Colonic mucosa (tissue), 4 donors: ENCODE measurements at regions of chr21 and their contacts with region 1.

Region 1: DNA sequence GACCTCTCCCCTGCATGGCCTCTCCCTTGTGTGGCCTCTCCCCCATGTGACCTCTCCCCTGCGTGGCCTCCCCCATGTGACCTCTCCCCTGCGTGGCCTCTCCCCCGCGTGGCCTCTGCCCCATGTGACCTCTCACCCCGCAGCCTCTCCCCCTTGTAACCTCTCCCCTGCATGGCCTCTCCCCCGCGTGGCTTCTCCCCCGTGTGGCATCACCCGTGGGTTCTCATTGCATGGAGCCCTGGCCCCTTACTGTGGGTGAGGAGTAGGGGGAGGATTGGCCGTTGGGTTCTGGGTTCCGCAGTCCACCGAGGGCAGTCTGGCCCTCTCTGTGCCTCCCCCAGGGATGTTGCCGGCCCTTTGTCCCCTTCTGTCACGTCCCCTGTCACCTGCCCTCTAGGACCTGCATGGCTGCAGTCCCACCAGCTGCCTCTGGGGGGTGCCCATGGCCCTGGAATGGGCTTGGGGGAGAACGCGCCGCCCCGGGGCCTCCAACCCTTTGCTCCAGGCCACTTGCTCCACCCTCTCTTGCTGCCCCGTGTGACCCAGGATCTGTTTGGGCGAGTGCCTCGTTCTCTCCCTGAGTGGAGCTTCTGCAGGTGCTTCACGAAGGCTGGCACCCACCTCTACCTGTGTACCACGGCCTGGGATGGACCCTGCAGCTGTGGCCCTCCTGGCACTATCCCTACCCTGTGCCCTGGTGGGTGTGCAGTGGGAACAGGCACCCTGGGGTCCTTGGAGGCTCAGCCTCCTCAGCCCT is 21.3 kb downstream of the RRP1 start:
- DNase-seq: peak; percentile 96
- H3K4me3 ChIP-seq: peak overlapping the region; percentile 1
- H3K27ac ChIP-seq: no peak overlapping the region
- H3K4me1 ChIP-seq: peaks cover 6% of the 10 kb centered on the region
- H3K27me3 ChIP-seq: no peaks in the 10 kb centered on the region
- CTCF ChIP-seq: peak; percentile 95

Region 2: GRCh38 chr21:43864313-43864961 is 53.8 kb after region 1 on chr21:
- intact Hi-C with region 1: loop called (anchors 5 kb)
- DNase-seq: peak; percentile 71
- H3K4me3 ChIP-seq: peak overlapping the region; percentile 72
- H3K27ac ChIP-seq: peak overlapping the region; percentile 58
- H3K4me1 ChIP-seq: peaks cover 8% of the 10 kb centered on the region
- H3K27me3 ChIP-seq: no peaks in the 10 kb centered on the region
- CTCF ChIP-seq: no peak

Region 3: DNA sequence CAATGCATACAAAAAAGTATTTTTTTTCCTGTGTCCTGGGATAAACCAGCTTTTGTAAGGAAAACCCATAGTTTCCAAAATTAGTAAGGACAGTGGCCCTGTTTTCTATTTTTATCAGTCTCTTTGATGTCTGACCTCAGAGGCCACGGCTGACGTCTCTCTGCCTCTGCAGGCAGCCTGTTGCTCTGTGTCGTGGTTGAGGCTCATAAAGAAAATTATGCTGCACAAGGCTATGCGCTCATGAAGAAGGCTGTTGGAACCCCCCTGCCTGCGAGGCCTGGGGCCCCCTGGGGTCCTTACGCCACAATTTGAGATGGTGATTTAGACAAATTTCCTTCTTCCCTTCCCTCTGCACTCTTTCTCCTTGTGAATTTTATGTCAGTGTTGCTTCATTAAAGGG is 103.2 kb after region 1 on chr21:
- intact Hi-C with region 1: no loop called
- DNase-seq: no peak
- H3K4me3 ChIP-seq: no peak overlapping the region
- H3K27ac ChIP-seq: no peak overlapping the region
- H3K4me1 ChIP-seq: no peaks in the 10 kb centered on the region
- H3K27me3 ChIP-seq: no peaks in the 10 kb centered on the region
- CTCF ChIP-seq: no peak

Region 4: DNA sequence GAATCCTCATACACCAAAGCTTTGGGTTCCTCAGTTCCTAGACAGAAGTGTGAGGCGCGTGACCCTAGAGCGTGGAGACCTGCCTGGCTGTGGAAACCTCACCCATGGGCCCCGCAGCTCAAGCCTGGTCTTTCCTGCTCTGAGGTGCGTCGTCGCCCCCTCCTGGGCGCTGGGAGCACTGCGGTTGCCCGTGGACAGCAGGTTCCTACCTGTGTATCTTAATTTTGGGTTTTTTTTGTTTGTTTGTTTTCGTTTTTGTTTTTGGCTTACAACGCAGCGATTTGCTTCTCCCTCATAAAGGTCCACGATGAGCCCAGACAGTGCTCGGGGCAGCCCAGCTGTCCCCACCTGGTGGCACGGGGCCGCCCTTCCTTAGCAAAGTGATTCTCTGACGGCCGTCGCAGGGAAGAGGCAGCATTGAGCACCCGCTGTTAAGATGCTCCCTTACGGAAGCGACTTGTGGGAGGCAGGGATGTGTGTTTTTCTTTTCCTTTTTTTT is 164.9 kb after region 1 on chr21:
- intact Hi-C with region 1: loop called (anchors 1 kb)
- DNase-seq: peak; percentile 85
- H3K4me3 ChIP-seq: no peak overlapping the region
- H3K27ac ChIP-seq: no peak overlapping the region
- H3K4me1 ChIP-seq: no peaks in the 10 kb centered on the region
- H3K27me3 ChIP-seq: no peaks in the 10 kb centered on the region
- CTCF ChIP-seq: peak; percentile 94